Transverse colon (tissue), 4 donors: ENCODE measurements at regions of chr3 and their contacts with region 1.

Region 1: DNA sequence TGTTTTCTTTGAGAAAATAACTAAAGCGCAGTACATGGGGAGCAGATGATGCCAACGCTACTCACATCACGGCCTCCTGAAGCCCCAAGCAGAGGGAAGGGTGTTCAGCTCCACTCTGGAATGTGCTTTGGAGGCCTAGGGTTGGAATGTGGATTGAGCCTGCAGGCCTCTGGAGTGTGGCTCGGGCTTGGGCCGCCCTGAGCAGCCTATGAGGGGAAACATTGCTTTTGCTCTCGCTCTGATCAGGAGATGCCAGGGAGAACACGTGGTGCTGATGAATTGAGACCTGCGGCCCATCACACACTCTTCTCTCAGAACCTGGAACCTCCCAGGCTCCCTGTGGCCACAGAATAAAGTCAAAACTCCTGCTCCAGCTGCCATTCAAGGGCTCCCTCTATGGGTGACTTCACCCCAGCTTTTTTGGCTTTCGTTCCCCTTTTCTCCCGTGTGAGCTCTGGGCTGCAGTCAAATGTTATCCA is 23.3 kb downstream of the CCDC13 start:
- DNase-seq: no peak
- H3K4me3 ChIP-seq: no peak overlapping the region
- H3K27ac ChIP-seq: peak overlapping the region in 3 of 4 donors; percentile 59 to 88 (median 78)
- H3K4me1 ChIP-seq: peaks cover 5 to 25% (median 18%) of the 10 kb centered on the region in 4 donors
- H3K27me3 ChIP-seq: no peaks in the 10 kb centered on the region
- CTCF ChIP-seq: peak in 4 of 5 experiments; percentile 18 to 30 (median 22)
- EP300 ChIP-seq: no peak
- POLR2A ChIP-seq: no peak

Region 2: GRCh38 chr3:42572278-42572677 is 177.5 kb before region 1 on chr3:
- in situ Hi-C with region 1: loop called in 2 of 4 experiments (anchors 10 to 25 kb)
- intact Hi-C with region 1: no loop called
- DNase-seq: peak; percentile 30
- H3K4me3 ChIP-seq: no peak overlapping the region
- H3K27ac ChIP-seq: no peak overlapping the region
- H3K4me1 ChIP-seq: no peaks in the 10 kb centered on the region
- H3K27me3 ChIP-seq: no peaks in the 10 kb centered on the region
- CTCF ChIP-seq: peak in 2 of 5 experiments; percentile 11 to 25
- EP300 ChIP-seq: no peak
- POLR2A ChIP-seq: no peak

Region 3: DNA sequence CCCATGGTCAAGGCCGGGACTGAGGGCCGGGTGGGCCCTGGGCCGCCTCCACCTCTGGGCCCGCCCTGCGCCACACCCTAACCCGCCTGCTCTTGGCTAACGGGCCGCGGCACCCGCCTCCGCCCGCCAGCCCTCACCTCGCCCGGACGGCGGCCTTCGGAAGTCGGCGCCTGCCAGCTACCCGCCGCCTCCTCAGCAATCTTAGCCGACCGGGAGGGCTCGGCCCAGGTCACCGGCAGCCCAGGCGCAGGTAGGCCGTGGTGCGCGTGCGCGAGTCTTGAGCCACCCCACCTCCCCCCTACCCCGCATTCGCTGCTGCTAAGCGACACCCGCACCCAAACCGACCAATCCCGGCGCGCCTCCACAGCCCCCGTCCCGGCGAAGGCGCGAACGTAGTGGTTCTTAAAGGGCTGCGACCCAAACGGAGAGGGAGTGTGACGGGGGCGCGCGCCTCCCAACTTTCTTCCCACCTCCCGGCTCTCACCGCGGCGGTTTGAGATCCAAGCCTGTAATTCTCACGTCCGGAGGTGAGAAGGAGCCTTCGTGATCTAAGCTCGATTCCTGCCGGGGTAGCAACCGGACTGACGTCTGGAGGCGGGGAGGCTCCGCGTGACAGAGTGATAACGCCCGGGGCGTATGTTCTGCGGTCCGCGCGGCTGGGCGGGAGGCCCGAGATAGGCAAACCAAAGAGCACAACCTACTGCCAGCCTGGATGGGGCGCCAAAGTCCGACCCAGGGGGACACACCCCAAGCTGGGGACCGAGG is 167.9 kb before region 1 on chr3 and contains the start of gene SEC22C:
- in situ Hi-C with region 1: loop called in 2 of 4 experiments (anchors 10 to 25 kb)
- intact Hi-C with region 1: loop called (anchors 10 kb)
- DNase-seq: peak; percentile 95
- H3K4me3 ChIP-seq: peak within 1 kb of the TSS; percentile 64 to 80 (median 72)
- H3K27ac ChIP-seq: peak within 1 kb of the TSS; percentile 84 to 93 (median 90)
- H3K4me1 ChIP-seq: peaks cover 0 to 22% (median 8%) of the 10 kb centered on the region in 4 donors
- H3K27me3 ChIP-seq: no peaks in the 10 kb centered on the region
- CTCF ChIP-seq: peak in 2 of 5 experiments; percentile 23 to 31
- EP300 ChIP-seq: no peak
- POLR2A ChIP-seq: peak; percentile 78
- total RNA-seq, gene SEC22C: 22.7 to 66.3 (median 32.1) TPM

Region 4: DNA sequence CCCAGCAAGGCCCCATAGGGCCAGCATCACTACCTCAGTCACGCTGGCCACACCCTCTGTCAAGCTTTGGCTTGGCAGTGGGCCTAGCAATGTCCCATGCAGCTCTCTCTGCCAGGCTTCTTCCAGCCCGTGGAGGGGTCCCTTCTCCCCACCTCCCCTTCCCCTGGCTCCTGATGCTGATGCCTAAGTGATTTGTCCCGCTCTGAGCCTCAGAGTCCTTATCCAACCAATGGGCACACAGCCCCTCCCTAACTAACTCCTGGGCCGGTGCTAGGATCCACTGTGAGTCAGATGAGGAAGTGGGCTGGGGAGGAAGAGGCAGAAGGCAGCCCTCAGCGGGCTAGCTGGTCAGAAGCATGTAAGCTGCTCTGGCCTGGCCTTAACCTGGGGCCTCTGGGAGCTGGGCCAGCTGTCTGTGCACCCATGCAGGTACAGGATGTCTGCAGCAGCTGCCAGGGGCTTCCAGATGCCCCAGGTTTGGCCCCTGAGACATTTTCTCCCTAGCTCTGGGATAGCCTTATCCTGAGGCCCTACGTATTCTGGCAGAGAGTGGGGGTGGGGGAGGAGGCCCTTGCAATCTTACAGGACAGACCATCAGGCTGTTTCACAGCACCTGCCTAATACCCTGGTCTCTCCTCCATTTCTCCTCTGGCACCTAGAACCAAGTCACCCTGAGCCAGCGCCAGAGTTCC is 97.0 kb before region 1 on chr3:
- in situ Hi-C with region 1: loop called in 2 of 4 experiments (anchors 10 kb)
- intact Hi-C with region 1: loop called (anchors 5 kb)
- DNase-seq: peak; percentile 72
- H3K4me3 ChIP-seq: peak overlapping the region in 3 of 4 donors; percentile 9 to 69 (median 67)
- H3K27ac ChIP-seq: peak overlapping the region; percentile 85 to 95 (median 90)
- H3K4me1 ChIP-seq: peaks cover 16 to 38% (median 27%) of the 10 kb centered on the region in 4 donors
- H3K27me3 ChIP-seq: no peaks in the 10 kb centered on the region
- CTCF ChIP-seq: no peak
- EP300 ChIP-seq: no peak
- POLR2A ChIP-seq: peak; percentile 68

Region 5: DNA sequence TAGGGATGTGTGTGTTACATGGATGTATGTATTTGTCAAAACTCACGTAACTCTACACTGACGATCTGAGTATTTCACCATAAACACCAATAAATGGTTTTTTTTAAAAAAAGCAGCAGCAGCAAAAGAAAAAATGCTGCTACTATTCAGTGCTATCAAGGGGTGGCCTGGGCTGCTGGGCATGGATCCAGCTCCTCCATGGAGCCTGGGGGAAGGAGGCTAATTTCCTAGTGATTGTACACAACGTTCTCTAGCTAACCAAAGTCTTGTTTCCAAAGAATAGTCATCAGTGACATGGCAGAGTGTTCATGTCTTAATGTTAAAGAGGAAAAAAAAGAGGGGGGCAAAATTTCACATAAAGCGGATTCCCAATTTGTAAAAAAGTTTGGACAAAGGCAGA is 327.1 kb after region 1 on chr3:
- in situ Hi-C with region 1: no loop called
- intact Hi-C with region 1: no loop called
- DNase-seq: no peak
- H3K4me3 ChIP-seq: no peak overlapping the region
- H3K27ac ChIP-seq: no peak overlapping the region
- H3K4me1 ChIP-seq: no peaks in the 10 kb centered on the region
- H3K27me3 ChIP-seq: no peaks in the 10 kb centered on the region
- CTCF ChIP-seq: no peak
- EP300 ChIP-seq: no peak
- POLR2A ChIP-seq: no peak